MCF 10A (cell line): ENCODE measurements at regions of chr17 and their contacts with region 1.

Region 1: DNA sequence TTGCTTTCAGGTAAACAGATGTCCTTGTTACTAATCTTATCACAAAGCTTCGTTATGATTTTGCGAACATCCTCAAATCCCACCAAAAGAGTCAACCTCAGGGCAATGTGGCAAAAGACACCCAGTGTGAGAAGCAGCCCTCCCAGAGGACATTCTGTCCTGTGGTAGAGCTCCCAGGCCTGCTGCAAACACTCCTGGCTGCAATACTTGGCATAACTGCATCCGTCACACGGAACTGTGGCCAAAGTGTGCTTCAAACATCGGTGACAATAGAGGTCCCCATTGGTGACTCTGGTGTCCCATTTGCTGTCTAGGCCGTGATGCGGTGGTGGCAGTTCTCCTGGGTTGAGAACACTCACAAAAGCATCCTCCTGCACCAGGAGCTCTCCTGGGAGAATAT is 29.5 kb downstream of the SMYD4 start:
- DNase-seq: no peak
- H3K4me3 Mint-ChIP-seq: no peak overlapping the region
- H3K27ac Mint-ChIP-seq: no peak overlapping the region
- H3K4me1 Mint-ChIP-seq: no peaks in the 10 kb centered on the region
- H3K27me3 Mint-ChIP-seq: no peaks in the 10 kb centered on the region
- CTCF ChIP-seq: no peak

Region 2: DNA sequence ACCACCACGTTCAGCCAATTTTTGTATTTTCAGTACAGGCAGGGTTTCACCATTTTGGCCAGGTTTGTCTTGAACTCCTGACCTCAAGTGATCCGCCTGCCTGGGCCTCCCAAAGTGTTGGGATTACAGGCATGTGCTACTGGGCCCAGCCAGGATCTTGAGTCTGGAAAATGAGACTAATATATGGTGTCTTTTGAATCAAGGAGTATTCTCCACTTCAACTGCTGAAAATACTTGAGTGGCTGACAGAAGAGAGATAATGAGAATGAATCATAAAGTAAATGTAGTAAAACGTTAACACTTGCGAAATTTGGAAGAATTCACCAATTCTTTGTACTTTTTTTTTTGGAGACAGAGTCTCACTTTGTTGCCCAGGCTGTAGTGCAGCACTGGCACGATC is 12.8 kb after region 1 on chr17:
- CTCF ChIA-PET with region 1: interaction called, 3 read pairs
- POLR2A ChIA-PET with region 1: interaction called, 14 read pairs
- intact Hi-C with region 1: no loop called
- DNase-seq: peak; percentile 2
- H3K4me3 Mint-ChIP-seq: no peak overlapping the region
- H3K27ac Mint-ChIP-seq: no peak overlapping the region
- H3K4me1 Mint-ChIP-seq: no peaks in the 10 kb centered on the region
- H3K27me3 Mint-ChIP-seq: no peaks in the 10 kb centered on the region
- CTCF ChIP-seq: no peak